ENCODE measurements at regions of chr13 and their contacts with region 1.

Region 1: DNA sequence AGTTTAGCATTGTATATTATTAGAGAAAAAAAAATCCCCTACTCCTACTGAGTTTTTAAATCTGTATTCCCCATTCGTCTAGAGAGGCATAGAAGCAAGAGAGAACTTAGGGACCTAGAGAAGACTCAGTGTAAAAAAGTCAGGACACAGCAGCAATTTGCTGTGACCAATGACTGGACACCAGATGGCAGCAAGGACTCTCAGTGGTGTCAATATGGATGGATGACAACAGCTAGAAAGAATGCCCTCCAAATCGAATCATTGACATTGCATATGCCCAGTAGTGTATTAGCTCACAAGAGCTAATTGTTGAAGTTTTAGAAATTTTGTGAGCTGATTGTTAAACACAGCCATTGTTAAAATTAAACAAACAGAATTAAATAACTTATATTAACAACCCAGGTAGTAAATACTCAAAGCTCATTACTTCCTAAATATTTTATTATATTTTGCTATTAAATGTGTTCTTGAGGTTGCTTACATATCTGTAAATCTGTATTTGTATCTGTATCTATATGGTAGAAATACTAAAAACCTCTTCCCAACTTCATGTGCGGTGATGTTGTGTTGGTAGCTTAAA is 43.9 kb downstream of the SIAH3 start:
- DNase-seq: peak; percentile 47
- CTCF ChIP-seq: peak; percentile 68

Region 2: DNA sequence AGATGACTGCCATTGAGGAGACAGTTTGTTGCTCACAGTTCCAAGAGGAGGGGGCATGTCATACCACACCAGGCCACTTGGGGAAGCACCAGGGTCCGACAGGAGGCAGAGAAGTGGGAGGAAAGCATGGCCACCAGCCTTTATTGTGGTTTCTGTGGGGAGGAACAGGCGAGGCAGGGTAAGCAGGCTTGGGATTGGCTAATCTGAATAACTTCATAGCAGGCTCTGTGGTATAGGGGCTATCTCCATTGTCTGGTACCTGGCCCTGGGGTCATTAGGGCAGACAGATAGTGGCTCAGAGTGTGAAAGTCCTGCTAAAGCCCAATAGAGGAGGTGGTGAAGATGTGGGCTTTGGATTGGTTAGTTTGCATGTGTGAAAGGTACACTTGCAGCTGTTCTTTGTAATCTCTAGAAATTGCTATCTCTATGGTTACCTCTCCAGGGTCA is 70.0 kb before region 1 on chr13:
- CTCF ChIA-PET with region 1: no interaction called
- POLR2A ChIA-PET with region 1: no interaction called
- DNase-seq: peak; percentile 48
- CTCF ChIP-seq: peak; percentile 34

Region 3: DNA sequence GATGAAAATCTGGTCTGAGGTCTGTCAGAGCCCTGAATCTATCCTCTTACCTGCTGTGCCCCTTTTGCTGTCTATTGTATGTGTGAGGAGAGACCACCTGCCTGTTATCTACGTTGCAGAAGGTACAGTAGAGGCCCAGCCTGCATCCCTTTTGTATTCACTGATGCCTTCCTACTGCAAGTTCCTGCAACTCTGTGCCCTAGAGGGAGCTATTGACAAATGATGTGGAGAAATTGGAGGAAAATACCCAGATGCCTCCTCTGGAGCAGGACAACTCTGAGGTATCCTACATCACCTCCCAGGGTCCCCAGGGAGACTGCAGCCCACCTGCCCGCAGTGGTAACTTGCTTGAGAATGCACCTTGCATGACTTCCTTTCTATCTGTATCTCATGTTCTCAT is 10.2 kb after region 1 on chr13:
- CTCF ChIA-PET with region 1: interaction called, 10 read pairs
- POLR2A ChIA-PET with region 1: no interaction called
- DNase-seq: no peak
- CTCF ChIP-seq: no peak

Region 4: DNA sequence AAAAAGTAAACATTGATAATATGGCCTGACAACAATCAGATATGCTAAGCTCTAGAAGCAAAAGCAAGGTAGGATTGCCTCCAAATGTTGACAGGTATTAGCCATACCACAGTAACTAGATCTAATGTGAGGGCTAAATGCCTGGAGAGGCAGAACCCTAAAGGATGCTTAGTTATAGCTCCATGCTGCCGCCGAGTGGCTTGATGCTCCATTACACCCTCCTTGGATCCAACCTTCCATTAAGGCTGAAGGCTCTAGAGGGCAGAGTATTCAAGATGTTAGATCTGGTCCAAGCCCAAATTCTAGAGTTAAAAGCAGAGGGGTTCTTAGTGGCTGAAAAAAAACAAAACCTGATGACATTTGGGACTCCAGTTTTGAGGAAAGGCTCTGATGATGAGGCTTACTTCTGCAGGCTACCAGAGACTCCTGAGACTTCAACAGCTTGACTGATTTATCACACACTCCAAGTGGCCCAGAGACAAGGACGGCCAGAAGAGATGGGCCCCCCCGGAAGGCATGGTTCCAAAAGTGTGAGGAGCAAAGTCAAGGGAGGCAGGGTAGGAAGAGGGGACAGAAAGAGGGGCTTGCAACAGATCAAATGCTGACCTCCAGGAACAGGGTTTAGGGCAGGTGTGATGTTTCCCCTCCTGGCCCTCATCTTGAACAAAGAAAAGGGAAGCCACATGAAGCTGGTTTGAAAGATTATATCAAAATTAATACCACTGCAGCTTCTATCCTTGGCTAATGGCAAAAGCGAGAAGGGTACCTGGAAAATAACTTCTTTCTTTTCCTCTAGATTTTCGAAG is 319.1 kb after region 1 on chr13:
- CTCF ChIA-PET with region 1: interaction called, 42 read pairs
- POLR2A ChIA-PET with region 1: no interaction called
- DNase-seq: peak; percentile 58
- CTCF ChIP-seq: peak; percentile 88

Region 5: GRCh38 chr13:46288570-46289259 is 481.1 kb after region 1 on chr13:
- CTCF ChIA-PET with region 1: interaction called, 17 read pairs
- POLR2A ChIA-PET with region 1: no interaction called
- DNase-seq: peak; percentile 59
- CTCF ChIP-seq: peak; percentile 74

Region 6: DNA sequence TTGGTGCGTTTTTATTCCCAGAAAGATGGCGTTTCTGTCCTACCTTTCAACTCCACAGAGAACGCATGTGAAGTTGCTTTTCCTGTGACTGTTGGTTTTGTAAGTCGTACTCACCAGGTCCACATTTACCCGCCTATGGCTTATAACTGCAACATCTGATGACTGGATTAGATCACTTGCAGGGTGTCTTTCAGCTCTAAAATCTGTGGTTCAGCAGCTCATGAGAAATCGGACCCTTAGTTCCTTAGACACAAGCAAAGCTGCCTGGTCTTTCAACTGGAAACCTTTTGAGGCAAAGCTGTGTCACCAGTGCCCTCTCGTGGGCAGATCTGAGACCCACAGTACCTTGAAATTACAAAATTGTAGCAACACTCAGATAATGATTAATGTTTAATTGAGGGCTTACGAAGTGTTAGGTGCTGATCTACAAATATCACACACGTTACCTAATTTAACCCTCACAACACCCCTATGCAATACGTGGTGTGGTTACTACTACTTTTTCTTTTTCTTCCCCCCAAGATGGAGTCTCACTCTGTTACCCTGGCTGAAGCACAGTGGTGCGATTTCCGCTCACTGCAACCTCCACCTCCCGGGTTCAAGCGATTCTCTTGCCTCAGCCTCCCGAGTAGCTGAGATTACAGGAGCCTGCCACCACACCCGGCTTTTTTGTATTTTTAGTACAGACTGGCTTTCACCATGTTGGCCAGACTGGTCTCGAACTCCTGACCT is 514.0 kb after region 1 on chr13:
- CTCF ChIA-PET with region 1: interaction called, 15 read pairs
- POLR2A ChIA-PET with region 1: no interaction called
- DNase-seq: peak; percentile 74
- CTCF ChIP-seq: peak; percentile 89